PC-9 (cell line): ENCODE measurements at regions of chr1 and their contacts with region 1.

Region 1: DNA sequence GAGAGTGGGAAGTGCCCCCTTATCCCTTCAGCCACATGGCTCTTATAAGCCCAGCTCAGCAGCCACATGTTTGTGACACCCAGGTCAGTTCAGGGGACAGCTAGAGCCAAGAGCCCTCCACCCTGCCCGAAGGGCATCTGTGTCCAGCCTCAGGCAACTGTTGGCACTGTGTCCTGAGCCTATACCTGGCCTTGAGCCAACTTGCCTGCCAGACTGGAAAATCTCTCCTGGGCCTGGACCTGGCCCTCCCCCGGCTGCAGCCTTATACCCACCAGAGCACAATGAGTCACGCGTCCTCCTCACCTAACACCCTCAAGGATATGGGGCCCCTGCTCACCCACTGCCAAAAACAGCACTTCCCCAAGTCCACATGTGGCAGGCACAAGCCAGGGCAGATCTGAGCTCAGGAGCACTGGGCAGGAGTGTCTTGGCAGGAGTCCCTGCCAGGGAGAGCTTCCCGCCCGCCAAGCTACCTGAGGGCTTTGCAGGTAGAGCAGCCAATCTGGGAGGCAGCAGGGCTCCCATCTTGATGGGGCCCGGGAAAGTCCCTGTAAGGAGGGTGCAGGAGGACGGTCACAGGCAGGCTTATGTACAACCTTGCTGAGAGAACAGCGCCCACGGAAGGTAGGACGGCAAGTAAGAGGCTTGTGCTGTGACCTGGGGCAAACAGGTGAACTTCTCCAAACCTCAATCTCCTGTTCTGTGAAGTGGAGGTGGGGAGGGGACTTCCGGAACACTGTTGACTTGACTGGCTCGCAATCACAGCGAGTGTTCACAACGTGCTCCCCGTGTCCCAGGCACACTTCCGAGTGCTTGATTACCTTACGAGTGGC is 19.8 kb upstream of the HSPG2 start:
- DNase-seq: peak; percentile 89 to 97
- H3K4me3 ChIP-seq: no peak overlapping the region
- H3K27ac ChIP-seq: peak overlapping the region; percentile 3; the same call in 1 of the 2 replicates
- H3K4me1 ChIP-seq: peaks cover 29% of the 10 kb centered on the region
- H3K27me3 ChIP-seq: no peaks in the 10 kb centered on the region
- CTCF ChIP-seq: no peak

Region 2: DNA sequence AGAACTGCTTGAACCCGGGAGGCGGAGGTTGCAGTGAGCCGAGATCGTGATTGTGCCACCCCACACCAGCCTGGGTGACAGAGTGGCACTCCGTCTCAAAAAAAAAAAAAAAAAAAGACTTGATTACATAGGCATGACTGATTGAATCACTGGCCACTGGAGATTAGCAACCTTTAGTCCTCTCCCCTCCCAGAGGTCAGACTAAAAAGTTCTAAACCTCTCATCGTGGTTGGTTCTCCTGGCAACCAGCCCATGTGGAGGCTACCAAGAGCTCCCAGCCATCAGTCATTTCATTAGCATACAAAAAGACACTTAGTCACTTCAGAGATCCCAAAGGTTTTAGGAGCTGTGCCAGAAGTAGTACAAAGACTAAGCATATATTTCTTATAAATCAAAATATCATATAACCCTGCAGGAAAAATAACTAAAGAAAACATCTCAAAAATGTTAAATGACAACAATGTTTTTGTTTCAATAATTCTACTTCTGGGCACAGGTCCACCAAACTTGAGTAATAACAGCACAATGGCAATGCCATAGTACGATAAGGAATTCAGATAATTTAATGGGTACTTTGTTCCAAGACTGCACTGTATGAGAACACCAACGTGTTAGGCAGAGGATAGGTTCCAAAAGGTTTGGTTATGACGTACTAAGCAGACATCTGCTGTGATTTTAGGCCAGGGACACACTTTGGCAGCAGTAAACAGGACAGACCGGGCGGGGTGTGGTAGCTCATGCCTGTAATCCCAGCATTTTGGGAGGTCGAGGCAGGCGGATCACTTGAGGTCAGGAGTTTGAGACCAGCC is 192.1 kb before region 1 on chr1:
- CTCF ChIA-PET with region 1: no interaction called
- POLR2A ChIA-PET with region 1: no interaction called
- intact Hi-C with region 1: loop called (anchors 2 kb)
- DNase-seq: peak; percentile 88 to 96
- H3K4me3 ChIP-seq: no peak overlapping the region
- H3K27ac ChIP-seq: peak overlapping the region; percentile 60
- H3K4me1 ChIP-seq: peaks cover 26% of the 10 kb centered on the region
- H3K27me3 ChIP-seq: no peaks in the 10 kb centered on the region
- CTCF ChIP-seq: no peak

Region 3: GRCh38 chr1:21869620-21870121 is 87.3 kb before region 1 on chr1:
- CTCF ChIA-PET with region 1: no interaction called
- POLR2A ChIA-PET with region 1: no interaction called
- intact Hi-C with region 1: loop called (anchors 1 kb)
- DNase-seq: peak; percentile 92 to 98
- H3K4me3 ChIP-seq: no peak overlapping the region
- H3K27ac ChIP-seq: no peak overlapping the region
- H3K4me1 ChIP-seq: peaks cover 37% of the 10 kb centered on the region
- H3K27me3 ChIP-seq: no peaks in the 10 kb centered on the region
- CTCF ChIP-seq: no peak

Region 4: GRCh38 chr1:21904704-21905520 is 52.0 kb before region 1 on chr1:
- CTCF ChIA-PET with region 1: no interaction called
- POLR2A ChIA-PET with region 1: no interaction called
- intact Hi-C with region 1: loop called (anchors 2 kb)
- DNase-seq: peak; percentile 79 to 86
- H3K4me3 ChIP-seq: no peak overlapping the region
- H3K27ac ChIP-seq: no peak overlapping the region
- H3K4me1 ChIP-seq: no peaks in the 10 kb centered on the region
- H3K27me3 ChIP-seq: no peaks in the 10 kb centered on the region
- CTCF ChIP-seq: no peak

Region 5: GRCh38 chr1:21931171-21932093 is 25.5 kb before region 1 on chr1:
- CTCF ChIA-PET with region 1: no interaction called
- POLR2A ChIA-PET with region 1: interaction called, 6 read pairs
- intact Hi-C with region 1: loop called (anchors 2 kb)
- DNase-seq: peak; percentile 87 to 94
- H3K4me3 ChIP-seq: peak overlapping the region; percentile 28; the same call in 1 of the 2 replicates
- H3K27ac ChIP-seq: peak overlapping the region; percentile 87
- H3K4me1 ChIP-seq: peaks cover 53% of the 10 kb centered on the region
- H3K27me3 ChIP-seq: no peaks in the 10 kb centered on the region
- CTCF ChIP-seq: no peak